ENCODE measurements at regions of chr1 and their contacts with region 1.

Region 1: GRCh38 chr1:153796791-153797659 is 21.8 kb downstream of the SLC27A3 start:
- DNase-seq: peak; percentile 75
- ATAC-seq: peak; percentile 66
- H3K4me3 Mint-ChIP-seq: peak overlapping the region; percentile 61
- H3K27ac Mint-ChIP-seq: peak overlapping the region; percentile 86
- H3K4me1 Mint-ChIP-seq: peaks cover 31% of the 10 kb centered on the region
- H3K27me3 Mint-ChIP-seq: no peaks in the 10 kb centered on the region

Region 2: GRCh38 chr1:153783233-153784190 is 13.5 kb before region 1 on chr1:
- POLR2A ChIA-PET with region 1: interaction called, 10 read pairs
- DNase-seq: peak; percentile 96
- ATAC-seq: peak; percentile 98
- H3K4me3 Mint-ChIP-seq: peak overlapping the region; percentile 94
- H3K27ac Mint-ChIP-seq: peak overlapping the region; percentile 97
- H3K4me1 Mint-ChIP-seq: peaks cover 12% of the 10 kb centered on the region
- H3K27me3 Mint-ChIP-seq: no peaks in the 10 kb centered on the region